ENCODE measurements at regions of chr2 and their contacts with region 1.

Region 1: DNA sequence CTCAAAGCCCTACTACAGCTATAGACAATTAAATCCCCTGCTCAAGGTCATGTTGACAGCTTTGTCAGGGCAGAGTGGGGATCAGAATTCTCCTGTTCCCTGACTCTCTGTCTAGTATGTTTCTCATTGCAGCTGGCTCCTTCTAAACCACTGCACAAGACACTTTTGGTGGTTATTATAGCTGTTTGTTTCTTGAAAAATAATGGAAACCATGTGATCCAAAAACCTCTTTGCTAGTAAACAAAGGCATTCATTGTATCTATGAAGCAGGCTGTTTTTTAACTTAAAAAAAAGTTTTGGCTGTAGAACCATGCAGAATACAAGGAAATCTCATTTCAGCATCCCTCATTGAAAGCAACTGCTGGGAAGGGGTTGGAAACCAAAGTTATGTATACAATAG is 352.5 kb upstream of the EPHA4 start:
- DNase-seq: no peak
- H3K4me3 ChIP-seq: no peak overlapping the region
- H3K27ac ChIP-seq: no peak overlapping the region
- H3K4me1 ChIP-seq: no peaks in the 10 kb centered on the region
- H3K27me3 ChIP-seq: peaks cover 3% of the 10 kb centered on the region
- CTCF ChIP-seq: no peak

Region 2: GRCh38 chr2:221124532-221125240 is 799.9 kb before region 1 on chr2:
- CTCF ChIA-PET with region 1: no interaction called
- POLR2A ChIA-PET with region 1: interaction called, 16 read pairs
- intact Hi-C with region 1: no loop called
- DNase-seq: peak; percentile 88
- H3K4me3 ChIP-seq: peak overlapping the region; percentile 16
- H3K27ac ChIP-seq: no peak overlapping the region
- H3K4me1 ChIP-seq: peaks cover 26% of the 10 kb centered on the region
- H3K27me3 ChIP-seq: no peaks in the 10 kb centered on the region
- CTCF ChIP-seq: no peak

Region 3: DNA sequence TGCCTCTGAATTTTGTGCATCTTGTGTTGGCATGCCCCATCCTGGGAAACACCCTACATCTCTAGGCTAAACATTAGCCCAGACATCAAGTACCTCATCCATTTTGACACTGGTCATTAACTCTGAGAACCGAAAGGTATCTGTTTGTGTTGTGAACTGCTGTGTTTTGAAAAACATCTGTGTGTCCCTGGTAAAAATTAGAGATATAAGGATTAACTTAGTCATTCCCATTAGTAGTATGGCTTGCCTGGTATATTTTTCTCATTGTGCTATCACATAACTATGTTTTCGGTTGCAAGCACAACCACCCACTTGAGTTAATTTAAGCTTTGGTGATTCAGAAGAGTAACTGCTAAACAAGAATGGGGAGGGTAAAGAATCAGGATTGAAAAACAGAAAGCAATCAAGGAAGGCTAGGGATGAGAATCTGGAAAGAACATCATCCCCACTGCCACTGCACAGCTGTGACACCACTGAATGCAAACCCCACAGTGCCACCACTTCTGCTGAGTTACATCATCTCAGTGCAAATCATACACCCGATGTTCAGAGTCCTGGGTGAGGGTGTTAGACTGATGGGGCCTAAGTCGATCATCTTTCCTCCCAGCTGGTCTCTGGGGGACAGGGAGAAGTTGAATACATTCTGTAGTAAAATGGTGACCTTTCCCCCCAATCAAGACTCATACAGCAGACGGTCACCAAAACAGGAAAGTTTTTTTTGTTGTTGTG is 586.5 kb before region 1 on chr2:
- CTCF ChIA-PET with region 1: no interaction called
- POLR2A ChIA-PET with region 1: no interaction called
- intact Hi-C with region 1: no loop called
- DNase-seq: no peak
- H3K4me3 ChIP-seq: no peak overlapping the region
- H3K27ac ChIP-seq: no peak overlapping the region
- H3K4me1 ChIP-seq: no peaks in the 10 kb centered on the region
- H3K27me3 ChIP-seq: no peaks in the 10 kb centered on the region
- CTCF ChIP-seq: no peak

Region 4: DNA sequence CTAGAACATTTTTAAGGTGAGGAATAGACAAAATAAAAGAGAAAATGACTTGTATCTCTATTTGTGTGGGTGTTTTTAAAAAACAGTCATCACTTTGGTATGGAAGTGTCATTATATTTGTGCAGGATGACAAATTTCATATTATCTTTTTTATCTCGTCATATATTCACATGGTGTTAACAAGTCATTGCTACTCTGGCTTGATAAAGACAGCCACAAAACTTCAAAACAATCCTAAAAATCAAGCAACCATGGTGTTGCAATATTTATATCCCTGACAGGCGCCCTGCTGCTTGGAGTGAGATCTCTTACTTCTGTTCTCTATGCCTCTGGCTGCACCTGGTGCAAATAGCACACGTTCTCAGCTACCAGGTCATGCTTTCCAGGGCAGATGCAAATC is 74.5 kb before region 1 on chr2:
- CTCF ChIA-PET with region 1: no interaction called
- POLR2A ChIA-PET with region 1: no interaction called
- intact Hi-C with region 1: no loop called
- DNase-seq: no peak
- H3K4me3 ChIP-seq: no peak overlapping the region
- H3K27ac ChIP-seq: no peak overlapping the region
- H3K4me1 ChIP-seq: peaks cover 2% of the 10 kb centered on the region
- H3K27me3 ChIP-seq: peaks cover 13% of the 10 kb centered on the region
- CTCF ChIP-seq: no peak

Region 5: DNA sequence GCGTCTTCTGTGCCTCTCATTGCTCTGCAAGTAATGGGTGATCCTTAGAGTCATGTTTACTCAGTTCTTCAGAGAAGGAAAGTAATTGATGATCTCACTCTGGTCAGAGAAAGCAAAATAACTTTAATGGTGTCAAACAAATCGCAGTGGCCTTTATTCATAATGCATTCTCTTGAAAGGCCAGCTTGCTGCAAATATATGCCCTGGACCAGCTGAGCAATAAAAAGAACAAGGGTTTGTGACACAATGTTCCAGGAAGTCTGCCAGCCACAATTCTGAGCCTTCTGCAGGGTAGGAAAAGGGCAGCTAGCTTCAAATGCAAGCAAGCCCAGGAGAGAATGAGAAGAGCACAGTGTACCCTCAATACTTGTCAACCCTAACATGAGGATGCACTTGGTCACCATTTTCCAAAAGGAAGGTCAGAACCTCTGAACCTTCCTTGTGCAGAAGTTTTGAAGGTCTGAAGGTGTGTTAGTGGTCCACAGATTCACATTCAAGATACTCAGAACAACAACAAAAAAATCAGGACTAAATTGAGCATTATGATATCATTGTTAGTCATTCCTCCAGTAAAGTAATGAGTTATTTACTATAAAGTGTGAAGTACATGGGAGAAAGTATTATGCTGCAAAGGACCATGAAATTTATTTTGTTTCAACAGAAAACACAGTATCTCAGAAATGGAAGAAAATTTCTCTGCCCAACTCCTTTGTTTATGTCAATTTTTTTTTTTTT is 18.7 kb after region 1 on chr2:
- CTCF ChIA-PET with region 1: no interaction called
- POLR2A ChIA-PET with region 1: no interaction called
- intact Hi-C with region 1: no loop called
- DNase-seq: no peak
- H3K4me3 ChIP-seq: no peak overlapping the region
- H3K27ac ChIP-seq: no peak overlapping the region
- H3K4me1 ChIP-seq: no peaks in the 10 kb centered on the region
- H3K27me3 ChIP-seq: no peaks in the 10 kb centered on the region
- CTCF ChIP-seq: no peak

Region 6: GRCh38 chr2:222774968-222775367 is 850.4 kb after region 1 on chr2:
- CTCF ChIA-PET with region 1: no interaction called
- POLR2A ChIA-PET with region 1: no interaction called
- intact Hi-C with region 1: no loop called
- DNase-seq: peak; percentile 35
- H3K4me3 ChIP-seq: no peak overlapping the region
- H3K27ac ChIP-seq: no peak overlapping the region
- H3K4me1 ChIP-seq: no peaks in the 10 kb centered on the region
- H3K27me3 ChIP-seq: no peaks in the 10 kb centered on the region
- CTCF ChIP-seq: no peak

Measured in A673 (cell line).